ENCODE measurements at regions of chr17 and their contacts with region 1.

Region 1: DNA sequence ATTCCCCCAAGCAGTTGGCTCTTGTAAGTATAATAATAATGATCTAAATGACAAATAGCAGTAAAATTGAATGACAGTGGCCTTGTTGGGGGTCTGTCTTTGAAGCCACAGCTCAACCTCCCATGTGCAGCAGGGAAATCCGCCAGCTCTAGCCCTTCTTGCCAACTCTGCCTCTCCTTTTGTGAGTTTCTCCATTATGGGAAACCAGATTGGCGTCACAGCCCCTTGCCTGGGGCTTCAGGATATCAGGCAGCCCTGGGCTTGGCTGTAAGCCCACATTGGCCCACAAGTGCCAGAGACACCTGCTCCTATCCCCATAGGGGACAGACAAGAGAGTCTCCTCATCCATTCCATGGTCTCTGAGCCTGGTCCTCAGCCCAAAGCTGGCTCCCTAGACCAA is 70.4 kb upstream of the CACNG5 start:
- DNase-seq: no peak
- ATAC-seq: no peak
- H3K4me3 ChIP-seq: no peak overlapping the region
- H3K27ac ChIP-seq: no peak overlapping the region
- H3K4me1 ChIP-seq: no peaks in the 10 kb centered on the region
- H3K27me3 ChIP-seq: no peaks in the 10 kb centered on the region
- CTCF ChIP-seq: no peak

Region 2: GRCh38 chr17:66855204-66855603 is 90.6 kb after region 1 on chr17:
- intact Hi-C with region 1: no loop called
- DNase-seq: no peak
- ATAC-seq: no peak
- H3K4me3 ChIP-seq: no peak overlapping the region
- H3K27ac ChIP-seq: no peak overlapping the region
- H3K4me1 ChIP-seq: peaks cover 0 to 8% (median under 1%) of the 10 kb centered on the region in 9 donors
- H3K27me3 ChIP-seq: peaks cover 0 to 8% (median 0%) of the 10 kb centered on the region in 7 donors
- CTCF ChIP-seq: peak in 4 of 9 donors; percentile 14 to 39 (median 20)

Region 3: DNA sequence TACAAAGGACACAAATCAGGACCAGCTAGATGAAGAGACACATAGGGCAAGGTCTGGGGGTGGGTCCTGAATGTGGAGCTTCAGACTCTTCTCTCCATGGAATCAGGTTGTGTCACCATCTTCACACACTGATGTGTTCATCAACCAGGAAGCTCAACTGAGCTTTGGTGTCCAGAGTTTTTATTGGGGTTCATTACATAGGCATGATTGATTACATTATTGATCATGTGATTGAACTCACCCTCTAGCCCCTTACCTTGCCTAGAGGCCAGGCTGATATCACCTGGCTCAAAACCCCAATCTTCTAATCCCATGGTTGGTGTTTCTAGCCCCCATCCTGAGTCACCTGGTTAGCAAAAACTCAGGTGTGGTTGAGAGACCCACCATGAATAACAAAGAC is 115.1 kb after region 1 on chr17:
- intact Hi-C with region 1: loop called in 1 of 10 experiments (anchors 5 kb)
- DNase-seq: no peak
- ATAC-seq: no peak
- H3K4me3 ChIP-seq: no peak overlapping the region
- H3K27ac ChIP-seq: no peak overlapping the region
- H3K4me1 ChIP-seq: no peaks in the 10 kb centered on the region
- H3K27me3 ChIP-seq: peaks cover 0 to 18% (median 8%) of the 10 kb centered on the region in 7 donors
- CTCF ChIP-seq: no peak